Heart right ventricle (tissue), 16 donors: ENCODE measurements at regions of chr3 and their contacts with region 1.

Region 1: DNA sequence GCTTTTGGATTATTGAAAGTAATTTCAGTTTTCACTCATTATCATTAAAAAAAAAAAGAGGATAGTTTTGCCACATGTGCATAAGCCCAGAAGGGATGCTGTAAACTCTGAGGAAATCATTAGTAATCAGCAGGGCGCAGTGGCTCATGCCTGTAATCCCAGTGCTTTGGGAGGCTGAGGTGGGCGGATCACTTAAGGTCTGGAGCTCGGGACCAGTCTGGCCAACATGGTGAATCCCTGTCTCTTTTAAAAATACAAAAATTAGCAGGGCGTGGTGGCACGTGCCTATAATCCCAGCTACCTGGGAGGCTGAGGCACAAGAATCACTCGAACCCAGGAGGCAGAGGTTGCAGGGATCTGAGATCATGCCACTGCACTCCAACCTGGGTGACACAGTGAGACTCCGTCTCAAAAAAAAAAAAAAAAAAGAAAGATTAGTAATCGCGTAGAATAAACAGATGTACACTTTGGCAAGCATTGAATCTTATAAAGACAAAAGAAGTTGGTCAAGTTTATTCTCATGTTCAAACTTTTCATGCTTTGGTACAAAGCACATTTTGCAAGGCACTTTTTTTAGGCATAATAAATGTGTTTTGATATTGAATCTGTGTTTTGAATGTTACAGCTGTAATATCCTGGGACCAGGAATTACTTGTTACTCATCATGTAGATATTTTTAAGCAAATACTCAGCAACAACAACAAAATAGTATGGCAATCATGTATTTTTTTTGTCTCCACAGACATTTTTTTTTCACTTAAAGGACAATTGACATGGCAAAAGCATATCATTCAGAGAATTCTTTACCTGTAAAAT is 93.2 kb upstream of the AGTR1 start:
- DNase-seq: no peak
- ATAC-seq: peak in 2 of 8 donors; percentile 41 to 48
- H3K4me3 ChIP-seq: no peak overlapping the region
- H3K27ac ChIP-seq: no peak overlapping the region
- H3K4me1 ChIP-seq: peaks cover 0 to 11% (median 0%) of the 10 kb centered on the region in 9 donors
- H3K27me3 ChIP-seq: no peaks in the 10 kb centered on the region
- CTCF ChIP-seq: no peak

Region 2: GRCh38 chr3:148648685-148649352 is 44.3 kb after region 1 on chr3:
- intact Hi-C with region 1: loop called in 1 of 10 experiments (anchors 5 kb)
- DNase-seq: no peak
- ATAC-seq: peak in 2 of 8 donors; percentile 46 to 67
- H3K4me3 ChIP-seq: no peak overlapping the region
- H3K27ac ChIP-seq: peak overlapping the region in 2 of 10 donors; percentile 3 to 4
- H3K4me1 ChIP-seq: peaks cover 0 to 5% (median 0%) of the 10 kb centered on the region in 9 donors
- H3K27me3 ChIP-seq: no peaks in the 10 kb centered on the region
- CTCF ChIP-seq: no peak